Mammary epithelial cell (primary cell): ENCODE measurements at regions of chr10 and their contacts with region 1.

Region 1: GRCh38 chr10:118568327-118568848 is 27.1 kb downstream of the PRLHR start:
- DNase-seq: peak; percentile 36
- H3K4me3 ChIP-seq: no peak overlapping the region
- H3K27ac ChIP-seq: no peak overlapping the region
- H3K4me1 ChIP-seq: no peaks in the 10 kb centered on the region
- H3K27me3 ChIP-seq: no peaks in the 10 kb centered on the region
- CTCF ChIP-seq: peak; percentile 51 to 71

Region 2: GRCh38 chr10:117431160-117431559 is 1137.2 kb before region 1 on chr10:
- CTCF ChIA-PET with region 1: no interaction called
- dilution Hi-C with region 1: no loop called
- in situ Hi-C with region 1: no loop called
- intact Hi-C with region 1: loop called (anchors 10 kb)
- DNase-seq: peak; percentile 60
- H3K4me3 ChIP-seq: no peak overlapping the region
- H3K27ac ChIP-seq: no peak overlapping the region
- H3K4me1 ChIP-seq: no peaks in the 10 kb centered on the region
- H3K27me3 ChIP-seq: no peaks in the 10 kb centered on the region
- CTCF ChIP-seq: peak; percentile 39 to 57

Region 3: GRCh38 chr10:117609095-117609795 is 959.1 kb before region 1 on chr10:
- CTCF ChIA-PET with region 1: no interaction called
- dilution Hi-C with region 1: no loop called
- in situ Hi-C with region 1: no loop called
- intact Hi-C with region 1: loop called (anchors 5 kb)
- DNase-seq: peak; percentile 70
- H3K4me3 ChIP-seq: no peak overlapping the region
- H3K27ac ChIP-seq: no peak overlapping the region
- H3K4me1 ChIP-seq: peaks cover 11% of the 10 kb centered on the region
- H3K27me3 ChIP-seq: no peaks in the 10 kb centered on the region
- CTCF ChIP-seq: no peak

Region 4: DNA sequence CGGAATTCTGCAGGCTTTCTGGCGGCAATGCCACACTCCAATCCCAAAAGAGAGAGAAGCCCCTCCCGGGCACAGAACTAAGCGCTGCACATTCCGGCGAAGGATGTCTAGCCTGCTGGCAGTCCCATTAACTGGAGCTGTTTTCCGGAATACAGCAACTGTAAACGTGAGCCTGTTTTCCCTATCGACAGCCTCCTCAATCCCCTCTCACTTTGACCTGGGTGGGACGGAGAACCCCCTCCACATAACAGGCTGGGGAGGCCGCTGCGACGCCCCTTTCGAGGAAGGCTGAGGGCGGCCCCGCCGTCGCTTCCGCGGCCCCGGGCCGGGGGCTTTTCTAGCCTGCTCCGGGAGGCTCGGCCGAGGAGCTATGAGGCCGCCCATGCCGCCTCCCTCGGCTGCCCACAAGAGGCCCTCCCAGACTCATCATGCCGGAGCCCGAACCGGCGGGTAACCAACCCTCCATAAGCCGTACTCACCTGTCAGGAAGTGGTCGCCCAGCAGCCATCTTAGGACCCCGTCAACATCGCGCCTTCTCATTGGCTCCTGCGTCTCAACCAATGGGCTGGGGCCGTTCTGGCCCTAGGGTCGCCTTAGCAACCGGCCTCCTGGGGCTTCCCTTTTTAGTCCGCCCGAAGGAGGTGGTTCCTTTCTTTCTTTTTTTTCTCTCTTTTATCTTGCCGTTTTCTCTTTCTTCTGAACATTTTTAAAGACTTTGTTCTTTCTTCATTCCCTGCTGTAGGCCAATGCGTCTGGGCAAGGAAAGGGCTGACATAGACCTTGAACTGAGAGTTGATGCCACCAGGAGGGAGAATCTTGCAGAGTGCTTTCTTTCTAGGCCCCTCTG is 226.4 kb before region 1 on chr10 and contains the start of gene FAM204A:
- CTCF ChIA-PET with region 1: no interaction called
- dilution Hi-C with region 1: no loop called
- in situ Hi-C with region 1: no loop called
- intact Hi-C with region 1: loop called (anchors 1 kb)
- DNase-seq: peak; percentile 91
- H3K4me3 ChIP-seq: peak within 1 kb of the TSS; percentile 62 to 87 (median 83)
- H3K27ac ChIP-seq: peak within 1 kb of the TSS; percentile 75
- H3K4me1 ChIP-seq: peaks cover 10% of the 10 kb centered on the region
- H3K27me3 ChIP-seq: no peaks in the 10 kb centered on the region
- CTCF ChIP-seq: no peak
- total RNA-seq, gene FAM204A: 50.3 to 73.2 TPM

Region 5: GRCh38 chr10:118720685-118721538 is 152.5 kb after region 1 on chr10:
- CTCF ChIA-PET with region 1: no interaction called
- dilution Hi-C with region 1: no loop called
- in situ Hi-C with region 1: loop called (anchors 10 kb)
- intact Hi-C with region 1: loop called (anchors 1 kb)
- DNase-seq: peak; percentile 31
- H3K4me3 ChIP-seq: no peak overlapping the region
- H3K27ac ChIP-seq: no peak overlapping the region
- H3K4me1 ChIP-seq: no peaks in the 10 kb centered on the region
- H3K27me3 ChIP-seq: no peaks in the 10 kb centered on the region
- CTCF ChIP-seq: peak; percentile 69 to 73

Region 6: GRCh38 chr10:119006451-119007210 is 438.2 kb after region 1 on chr10:
- CTCF ChIA-PET with region 1: no interaction called
- dilution Hi-C with region 1: no loop called
- in situ Hi-C with region 1: loop called in 1 of 2 experiments (anchors 25 kb)
- intact Hi-C with region 1: no loop called
- DNase-seq: peak; percentile 96
- H3K4me3 ChIP-seq: no peak overlapping the region
- H3K27ac ChIP-seq: no peak overlapping the region
- H3K4me1 ChIP-seq: peaks cover 41% of the 10 kb centered on the region
- H3K27me3 ChIP-seq: no peaks in the 10 kb centered on the region
- CTCF ChIP-seq: no peak